ENCODE measurements at regions of chr1 and their contacts with region 1.

Region 1: DNA sequence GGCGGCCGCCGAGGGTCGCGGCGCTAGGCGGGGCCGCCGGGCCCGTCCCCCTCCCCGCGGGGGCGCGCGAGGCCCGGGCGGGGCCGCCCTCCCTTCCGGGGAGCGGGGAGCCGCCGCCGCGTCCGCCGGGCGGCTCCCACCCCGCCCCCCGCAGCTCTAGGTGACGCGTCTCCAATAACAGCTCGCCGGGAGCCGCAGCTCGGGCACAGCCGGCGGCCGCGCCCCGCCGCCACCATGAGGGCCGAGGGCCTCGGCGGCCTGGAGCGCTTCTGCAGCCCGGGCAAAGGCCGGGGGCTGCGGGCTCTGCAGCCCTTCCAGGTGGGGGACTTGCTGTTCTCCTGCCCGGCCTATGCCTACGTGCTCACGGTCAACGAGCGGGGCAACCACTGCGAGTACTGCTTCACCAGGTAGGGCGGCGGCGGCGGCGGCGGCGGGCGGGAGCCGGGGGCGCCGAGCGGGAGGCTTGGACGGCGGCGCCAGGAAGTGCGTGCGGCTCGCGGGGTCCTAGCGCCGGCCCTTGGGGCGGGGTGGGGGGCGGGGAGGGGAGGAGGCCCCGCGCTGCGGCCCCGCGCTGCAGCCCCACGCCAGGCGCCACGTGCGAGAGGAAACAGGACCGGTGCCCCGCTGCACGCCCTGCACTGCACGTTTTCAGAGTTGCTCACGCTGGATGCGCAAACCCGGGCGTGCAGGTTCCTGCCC is at the start of gene SMYD2:
- DNase-seq: peak; percentile 59
- H3K4me3 Mint-ChIP-seq: peak within 1 kb of the TSS; percentile 94
- H3K27ac Mint-ChIP-seq: peak within 1 kb of the TSS; percentile 92
- H3K4me1 Mint-ChIP-seq: peaks cover 42% of the 10 kb centered on the region
- H3K27me3 Mint-ChIP-seq: peaks cover 2% of the 10 kb centered on the region
- total RNA-seq, gene SMYD2: 25.7 and 26.8 TPM in 2 replicates

Region 2: DNA sequence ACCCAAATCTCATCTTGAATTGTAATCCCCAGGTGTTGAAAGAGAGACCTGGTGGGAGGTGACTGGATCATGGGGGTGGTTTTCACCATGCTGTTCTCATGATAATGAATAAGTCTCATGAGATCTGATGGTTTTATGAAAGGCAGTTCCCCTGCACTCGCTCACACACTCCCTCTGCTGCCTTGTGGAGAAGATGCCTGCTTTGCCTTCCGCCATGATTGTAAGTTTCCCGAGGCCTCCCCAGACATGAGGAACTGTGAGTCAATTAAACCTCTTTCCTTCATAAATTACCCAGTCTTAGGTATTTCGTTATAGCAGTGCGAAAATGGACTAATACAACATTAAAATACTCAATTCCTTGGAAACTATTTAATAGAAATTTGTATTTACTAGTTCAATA is 194.2 kb before region 1 on chr1:
- intact Hi-C with region 1: no loop called
- DNase-seq: no peak
- H3K4me3 Mint-ChIP-seq: no peak overlapping the region
- H3K27ac Mint-ChIP-seq: no peak overlapping the region
- H3K4me1 Mint-ChIP-seq: no peaks in the 10 kb centered on the region
- H3K27me3 Mint-ChIP-seq: peaks cover 2% of the 10 kb centered on the region

Region 3: DNA sequence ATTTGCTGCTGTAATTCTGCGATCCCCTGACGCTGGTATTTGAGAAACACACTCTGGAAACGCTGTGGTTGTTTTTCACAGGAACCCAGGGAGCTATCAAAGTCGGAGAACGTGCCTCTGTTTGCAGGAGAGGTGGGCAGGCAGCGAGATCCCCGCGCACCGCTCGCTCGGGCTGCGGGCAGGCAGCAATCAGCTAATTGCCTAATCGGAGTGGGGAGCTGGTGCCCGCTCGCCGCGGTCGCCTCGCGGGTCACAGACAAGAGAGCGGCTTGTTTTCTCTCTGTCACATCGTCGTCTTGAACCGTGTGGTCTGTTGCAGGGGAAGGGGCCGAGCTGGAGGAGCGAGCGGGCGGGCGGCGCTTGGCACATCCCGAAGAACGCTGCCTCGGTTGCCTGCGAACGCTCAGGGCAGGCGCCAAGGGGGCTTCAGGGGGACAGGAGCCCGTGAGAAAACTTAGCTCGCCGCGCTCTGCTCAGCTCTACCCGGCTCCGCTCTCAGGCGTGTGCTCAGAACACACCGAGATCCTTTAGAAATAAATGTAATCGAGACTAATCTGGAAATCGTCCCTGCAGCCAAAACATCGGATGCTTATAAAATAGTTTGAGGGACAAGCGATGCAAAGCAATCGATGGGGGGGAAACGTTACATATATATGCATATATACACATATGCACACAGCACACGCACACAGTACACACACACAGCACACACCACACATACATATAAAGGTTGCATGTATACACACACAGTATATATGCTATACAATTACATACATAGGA is 93.9 kb before region 1 on chr1:
- intact Hi-C with region 1: no loop called
- DNase-seq: no peak
- H3K4me3 Mint-ChIP-seq: no peak overlapping the region
- H3K27ac Mint-ChIP-seq: no peak overlapping the region
- H3K4me1 Mint-ChIP-seq: no peaks in the 10 kb centered on the region
- H3K27me3 Mint-ChIP-seq: peaks cover 57% of the 10 kb centered on the region

Region 4: DNA sequence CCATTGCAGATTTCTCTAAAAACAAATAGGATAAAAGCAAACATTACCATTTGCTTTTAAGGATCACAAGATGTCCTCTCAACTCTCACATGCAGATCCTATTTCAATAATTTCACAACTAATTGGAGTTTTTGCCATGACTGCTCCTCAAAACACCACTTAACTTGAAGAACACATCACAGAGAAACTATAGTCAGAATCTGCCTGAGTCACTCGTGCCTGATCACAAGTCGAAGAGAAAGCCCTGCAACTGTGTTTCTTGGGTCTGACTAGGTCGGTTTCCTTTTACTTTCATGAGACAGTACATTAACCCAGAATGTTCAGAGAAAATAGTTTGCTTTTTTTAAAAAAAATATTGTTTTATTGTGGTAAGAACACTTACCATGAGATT is 46.5 kb before region 1 on chr1:
- intact Hi-C with region 1: no loop called
- DNase-seq: no peak
- H3K4me3 Mint-ChIP-seq: no peak overlapping the region
- H3K27ac Mint-ChIP-seq: no peak overlapping the region
- H3K4me1 Mint-ChIP-seq: no peaks in the 10 kb centered on the region
- H3K27me3 Mint-ChIP-seq: peaks cover 11% of the 10 kb centered on the region

Region 5: DNA sequence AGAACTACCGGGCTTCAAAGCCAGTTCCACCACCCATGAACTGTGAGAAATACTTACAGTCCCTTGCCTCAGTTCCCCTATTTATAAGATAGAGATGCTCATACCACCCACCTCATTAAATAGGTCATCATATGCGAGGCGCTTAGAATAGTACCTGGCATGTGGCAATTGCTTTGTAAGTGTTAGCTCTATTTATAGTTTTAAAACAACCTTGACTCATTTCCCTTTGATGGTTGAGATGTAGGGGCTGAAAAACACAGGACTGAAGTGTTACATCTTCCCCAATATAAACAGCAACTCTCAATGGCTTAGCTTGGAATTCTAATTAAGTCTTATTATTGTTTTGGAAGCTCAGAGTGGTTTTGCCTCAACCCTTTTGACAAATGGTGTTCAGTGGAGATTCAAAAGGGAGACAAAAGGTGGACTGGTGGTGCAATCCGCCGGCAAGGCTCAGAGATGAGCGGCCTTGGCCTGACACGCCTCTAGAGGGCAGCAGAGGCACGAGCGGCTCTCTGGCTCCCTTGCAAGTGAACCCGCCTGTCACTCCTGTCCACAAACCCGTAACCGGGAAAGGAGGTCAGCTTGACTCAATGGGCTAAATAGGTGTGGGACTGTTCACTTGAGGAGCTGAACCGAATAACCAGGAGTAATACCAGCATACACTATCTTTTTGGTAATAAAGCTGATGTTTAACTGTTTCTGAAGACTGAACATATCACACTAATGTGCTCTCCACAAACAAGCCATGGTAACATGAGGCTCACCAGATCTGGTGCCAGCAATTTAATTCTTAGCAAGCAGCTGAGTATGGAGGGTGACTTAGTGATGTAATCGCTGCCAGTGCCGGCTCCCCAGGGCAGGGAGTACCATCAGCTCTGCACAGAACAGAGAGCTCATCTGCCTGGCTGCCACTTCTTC is 19.7 kb before region 1 on chr1:
- intact Hi-C with region 1: loop called (anchors 1 kb)
- DNase-seq: peak; percentile 69
- H3K4me3 Mint-ChIP-seq: no peak overlapping the region
- H3K27ac Mint-ChIP-seq: no peak overlapping the region
- H3K4me1 Mint-ChIP-seq: peaks cover 27% of the 10 kb centered on the region
- H3K27me3 Mint-ChIP-seq: peaks cover 42% of the 10 kb centered on the region

Region 6: GRCh38 chr1:214310010-214310409 is 28.8 kb after region 1 on chr1:
- intact Hi-C with region 1: loop called (anchors 2 kb)
- DNase-seq: no peak
- H3K4me3 Mint-ChIP-seq: no peak overlapping the region
- H3K27ac Mint-ChIP-seq: no peak overlapping the region
- H3K4me1 Mint-ChIP-seq: peaks cover 29% of the 10 kb centered on the region
- H3K27me3 Mint-ChIP-seq: no peaks in the 10 kb centered on the region

Region 7: DNA sequence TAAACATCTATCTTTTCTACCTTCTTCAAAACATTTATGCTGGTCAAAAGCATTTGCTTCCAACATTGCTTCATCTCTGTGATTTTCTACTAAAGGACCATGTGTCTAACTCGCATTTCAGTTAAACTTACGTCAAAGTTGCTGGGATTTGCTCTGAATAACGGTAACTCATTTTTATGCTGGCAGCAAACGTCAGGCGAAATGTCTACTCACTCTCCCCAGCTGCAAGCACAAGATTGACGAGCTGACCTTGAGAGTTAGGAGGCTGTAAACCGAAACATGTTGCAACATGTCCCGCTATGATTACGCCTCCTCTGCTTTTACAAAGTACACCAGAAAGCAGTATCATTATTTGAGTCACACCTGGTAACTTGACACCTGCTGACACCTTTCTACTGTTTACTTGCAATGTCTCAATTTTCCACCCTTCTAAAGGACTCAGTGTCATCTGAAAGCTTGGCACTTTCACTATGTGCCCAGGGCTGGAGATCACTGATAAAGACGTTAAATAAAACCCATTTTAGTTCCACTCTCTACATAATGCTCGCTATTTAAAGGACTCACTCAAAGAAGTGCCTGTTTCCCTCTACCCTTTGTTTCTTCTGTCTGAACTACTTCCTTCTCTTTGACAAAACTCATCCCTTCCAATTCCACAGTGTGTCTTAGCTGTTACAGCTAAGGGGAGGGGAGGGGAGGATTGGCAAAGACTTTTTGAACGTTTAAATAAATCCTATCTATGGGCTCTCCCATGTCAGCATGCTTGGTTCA is 158.4 kb after region 1 on chr1:
- intact Hi-C with region 1: loop called (anchors 2 kb)
- DNase-seq: peak; percentile 52
- H3K4me3 Mint-ChIP-seq: peak overlapping the region; percentile 66
- H3K27ac Mint-ChIP-seq: peak overlapping the region; percentile 95
- H3K4me1 Mint-ChIP-seq: peaks cover 64% of the 10 kb centered on the region
- H3K27me3 Mint-ChIP-seq: no peaks in the 10 kb centered on the region

Region 8: DNA sequence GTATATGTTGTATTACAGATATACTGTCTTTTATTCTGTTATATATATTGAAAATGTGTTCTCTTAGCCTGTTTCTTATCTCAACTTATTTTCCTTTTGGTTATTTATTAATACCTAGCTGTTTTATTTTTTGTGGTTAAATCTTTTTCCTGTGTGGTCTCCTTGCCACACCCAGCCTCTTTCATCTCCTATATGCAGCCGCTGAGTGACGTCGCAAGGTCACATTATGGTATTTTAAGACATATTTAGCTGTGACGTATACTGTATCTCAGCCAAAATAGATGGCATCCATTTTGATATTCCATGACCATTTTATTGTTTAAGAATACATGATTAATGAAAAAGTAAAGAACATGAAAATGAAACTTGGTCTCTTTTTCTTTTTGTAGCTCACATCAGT is 350.9 kb after region 1 on chr1:
- intact Hi-C with region 1: no loop called
- DNase-seq: no peak
- H3K4me3 Mint-ChIP-seq: no peak overlapping the region
- H3K27ac Mint-ChIP-seq: peak overlapping the region; percentile 64
- H3K4me1 Mint-ChIP-seq: peaks cover 29% of the 10 kb centered on the region
- H3K27me3 Mint-ChIP-seq: no peaks in the 10 kb centered on the region